ENCODE measurements at regions of chr6 and their contacts with region 1.

Region 1: DNA sequence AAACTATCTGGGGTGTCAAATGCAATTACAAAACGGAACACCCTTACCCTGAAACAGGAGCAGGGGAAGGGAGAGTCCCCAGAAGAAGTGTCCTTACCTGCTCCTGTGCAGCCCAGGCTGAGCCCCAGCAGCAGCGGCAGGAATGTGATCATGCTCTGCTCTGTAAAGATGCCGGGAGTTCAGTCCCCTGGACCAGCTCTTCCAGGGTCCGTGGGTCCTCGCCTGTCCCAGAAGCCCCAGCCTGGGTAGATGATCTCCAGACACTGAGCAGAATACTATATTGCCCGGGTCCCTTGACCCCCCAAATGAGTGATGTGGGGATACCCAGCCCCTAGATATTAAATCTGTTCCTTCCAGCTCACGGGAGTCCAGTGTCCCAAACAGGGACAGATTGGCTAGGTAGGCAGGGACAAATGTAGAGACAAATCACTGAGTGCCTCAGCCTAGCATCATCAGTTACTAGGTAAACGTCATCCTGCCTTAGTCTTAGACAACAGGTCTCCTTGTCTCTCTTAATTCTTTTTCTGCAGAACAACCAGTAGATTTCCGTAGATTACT is at the start of gene HLA-DMB:
- DNase-seq: peak; percentile 6 to 75 (median 68)
- H3K4me3 ChIP-seq: peak within 1 kb of the TSS; percentile 73
- H3K4me3 Mint-ChIP-seq: peak within 1 kb of the TSS; percentile 88 to 97 (median 95)
- H3K27ac ChIP-seq: peak within 1 kb of the TSS; percentile 73
- H3K27ac Mint-ChIP-seq: peak within 1 kb of the TSS; percentile 94 to 99 (median 98)
- H3K4me1 ChIP-seq: peaks cover 58% of the 10 kb centered on the region
- H3K4me1 Mint-ChIP-seq: peaks cover 56 to 70% (median 64%) of the 10 kb centered on the region in 3 donors
- H3K27me3 ChIP-seq: no peaks in the 10 kb centered on the region
- H3K27me3 Mint-ChIP-seq: peaks cover 0 to 1% of the 10 kb centered on the region in 2 donors
- total RNA-seq, gene HLA-DMB: 4.3 to 5.3 TPM

Region 2: DNA sequence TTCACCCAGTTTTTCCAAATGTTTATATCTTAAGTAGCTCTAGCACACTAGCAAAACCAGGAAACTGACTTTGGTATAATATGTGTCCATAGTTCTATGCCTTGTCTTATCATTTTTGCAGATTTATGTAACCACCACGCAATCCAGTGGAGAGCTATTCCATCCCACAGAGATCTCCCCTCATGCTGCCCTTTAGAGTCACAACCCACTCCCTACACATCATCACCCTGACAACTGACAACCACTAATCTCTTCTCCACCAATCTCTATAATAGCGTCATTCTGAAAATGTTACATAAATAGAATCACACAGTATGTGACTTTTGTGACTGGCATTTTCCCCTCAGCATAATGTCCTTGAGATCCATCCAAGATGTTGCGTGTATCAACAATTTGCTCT is 439.7 kb before region 1 on chr6:
- CTCF ChIA-PET with region 1: no interaction called
- POLR2A ChIA-PET with region 1: no interaction called
- DNase-seq: no peak
- H3K4me3 ChIP-seq: no peak overlapping the region
- H3K4me3 Mint-ChIP-seq: no peak overlapping the region
- H3K27ac ChIP-seq: no peak overlapping the region
- H3K27ac Mint-ChIP-seq: no peak overlapping the region
- H3K4me1 ChIP-seq: no peaks in the 10 kb centered on the region
- H3K4me1 Mint-ChIP-seq: peaks cover 0 to 5% (median 0%) of the 10 kb centered on the region in 3 donors
- H3K27me3 ChIP-seq: no peaks in the 10 kb centered on the region
- H3K27me3 Mint-ChIP-seq: peaks cover 3 to 4% of the 10 kb centered on the region in 2 donors

Region 3: DNA sequence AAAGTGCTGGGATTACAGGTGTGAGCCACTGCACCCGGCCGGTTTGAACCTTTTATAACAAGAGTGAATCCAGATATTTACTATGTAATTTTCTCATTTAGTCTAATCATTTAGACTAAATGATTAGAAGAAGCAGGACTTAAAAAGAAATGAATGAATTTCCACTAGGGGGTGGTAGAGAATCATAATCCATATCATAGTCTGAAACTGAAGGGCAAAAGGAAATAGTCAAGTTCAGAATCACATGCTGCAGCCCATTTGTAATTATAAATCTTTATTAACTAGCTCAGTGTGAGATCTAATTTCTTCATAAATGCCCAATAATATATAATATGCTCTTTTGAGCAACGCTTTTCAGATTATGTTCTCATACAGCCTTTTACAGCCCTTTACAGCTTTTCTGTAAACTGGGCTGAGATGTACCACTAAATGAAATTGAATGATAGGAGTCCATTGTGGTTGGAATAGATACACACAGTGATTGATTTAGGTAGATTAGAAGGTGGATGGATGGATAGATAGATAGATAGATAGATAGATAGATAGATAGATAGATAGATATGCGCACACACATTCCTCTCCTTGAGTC is 54.9 kb before region 1 on chr6:
- CTCF ChIA-PET with region 1: interaction called, 11 read pairs
- POLR2A ChIA-PET with region 1: interaction called, 3 read pairs
- DNase-seq: peak in 2 of 5 donors; percentile 62 to 68
- H3K4me3 ChIP-seq: no peak overlapping the region
- H3K4me3 Mint-ChIP-seq: peak overlapping the region in 1 of 7 donors; percentile 3
- H3K27ac ChIP-seq: no peak overlapping the region
- H3K27ac Mint-ChIP-seq: no peak overlapping the region
- H3K4me1 ChIP-seq: no peaks in the 10 kb centered on the region
- H3K4me1 Mint-ChIP-seq: no peaks in the 10 kb centered on the region
- H3K27me3 ChIP-seq: no peaks in the 10 kb centered on the region
- H3K27me3 Mint-ChIP-seq: no peaks in the 10 kb centered on the region